ENCODE measurements at regions of chr6 and their contacts with region 1.

Region 1: GRCh38 chr6:121593011-121593690 is 157.7 kb downstream of the GJA1 start:
- DNase-seq: no peak
- ATAC-seq: no peak
- H3K4me3 Mint-ChIP-seq: no peak overlapping the region
- H3K27ac Mint-ChIP-seq: no peak overlapping the region
- H3K4me1 Mint-ChIP-seq: peaks cover 13% of the 10 kb centered on the region
- H3K27me3 Mint-ChIP-seq: no peaks in the 10 kb centered on the region; the same call in 1 of the 2 replicates
- CTCF ChIP-seq: no peak

Region 2: DNA sequence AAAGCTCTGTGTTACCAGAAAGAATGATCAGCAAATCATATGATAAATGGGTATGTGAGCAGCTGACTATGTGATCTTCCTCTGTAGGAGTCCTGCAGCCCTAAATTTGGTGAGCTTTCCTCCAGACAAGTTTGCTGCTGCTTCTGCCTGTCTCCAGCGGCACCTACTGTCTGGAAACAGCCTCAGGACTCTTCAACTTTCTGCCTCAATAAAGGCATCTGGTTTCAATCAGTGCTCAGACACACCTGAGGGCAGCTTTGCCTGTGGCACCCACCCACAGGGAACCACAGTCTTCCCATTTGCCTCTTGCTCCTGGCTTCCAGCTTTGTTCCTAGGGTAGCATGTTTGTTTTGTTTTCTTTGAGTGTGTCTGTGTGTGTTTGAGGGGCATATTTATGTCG is 1515.7 kb before region 1 on chr6:
- CTCF ChIA-PET with region 1: no interaction called
- POLR2A ChIA-PET with region 1: interaction called, 17 read pairs
- DNase-seq: peak; percentile 28
- ATAC-seq: peak; percentile 100
- H3K4me3 Mint-ChIP-seq: no peak overlapping the region
- H3K27ac Mint-ChIP-seq: no peak overlapping the region
- H3K4me1 Mint-ChIP-seq: no peaks in the 10 kb centered on the region
- H3K27me3 Mint-ChIP-seq: no peaks in the 10 kb centered on the region
- CTCF ChIP-seq: no peak

Region 3: DNA sequence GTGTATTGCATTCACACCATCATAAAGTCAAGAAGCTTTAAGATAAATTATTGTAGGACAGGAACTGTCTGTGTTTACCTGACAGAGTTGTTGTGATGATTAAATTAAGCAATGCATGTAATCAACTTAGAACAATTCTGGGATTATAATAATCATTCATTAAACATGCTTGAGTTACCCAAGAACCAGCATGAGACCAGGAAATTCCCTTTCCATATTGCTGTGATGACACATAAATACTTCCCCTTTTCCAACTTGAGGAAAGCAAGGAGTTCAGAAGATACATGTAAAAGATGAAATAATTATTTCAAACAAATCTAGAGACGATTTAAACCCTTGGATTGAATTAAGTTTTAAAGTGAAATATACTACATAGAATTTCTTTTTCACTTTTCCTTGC is 246.7 kb after region 1 on chr6:
- CTCF ChIA-PET with region 1: no interaction called
- POLR2A ChIA-PET with region 1: interaction called, 12 read pairs
- DNase-seq: no peak
- ATAC-seq: no peak
- H3K4me3 Mint-ChIP-seq: no peak overlapping the region
- H3K27ac Mint-ChIP-seq: no peak overlapping the region
- H3K4me1 Mint-ChIP-seq: no peaks in the 10 kb centered on the region
- H3K27me3 Mint-ChIP-seq: no peaks in the 10 kb centered on the region
- CTCF ChIP-seq: no peak